Prostate gland (tissue), 2 donors: ENCODE measurements at regions of chrX and their contacts with region 1.

Region 1: GRCh38 chrX:118847676-118848075 is 24.1 kb downstream of the ZCCHC12 start:
- DNase-seq: peak; percentile 25
- H3K4me3 ChIP-seq: no peak overlapping the region
- H3K27ac ChIP-seq: no peak overlapping the region
- H3K4me1 ChIP-seq: no peaks in the 10 kb centered on the region
- H3K27me3 ChIP-seq: no peaks in the 10 kb centered on the region
- CTCF ChIP-seq: peak; percentile 17 to 68 (median 65)
- POLR2A ChIP-seq: no peak

Region 2: GRCh38 chrX:119067023-119067739 is 219.5 kb after region 1 on chrX:
- intact Hi-C with region 1: loop called (anchors 5 kb)
- DNase-seq: peak; percentile 16
- H3K4me3 ChIP-seq: no peak overlapping the region
- H3K27ac ChIP-seq: no peak overlapping the region
- H3K4me1 ChIP-seq: no peaks in the 10 kb centered on the region
- H3K27me3 ChIP-seq: no peaks in the 10 kb centered on the region
- CTCF ChIP-seq: peak in 3 of 4 experiments; percentile 39 to 57 (median 45)
- POLR2A ChIP-seq: no peak